GM23248 (cell line): ENCODE measurements at regions of chr18 and their contacts with region 1.

Region 1: DNA sequence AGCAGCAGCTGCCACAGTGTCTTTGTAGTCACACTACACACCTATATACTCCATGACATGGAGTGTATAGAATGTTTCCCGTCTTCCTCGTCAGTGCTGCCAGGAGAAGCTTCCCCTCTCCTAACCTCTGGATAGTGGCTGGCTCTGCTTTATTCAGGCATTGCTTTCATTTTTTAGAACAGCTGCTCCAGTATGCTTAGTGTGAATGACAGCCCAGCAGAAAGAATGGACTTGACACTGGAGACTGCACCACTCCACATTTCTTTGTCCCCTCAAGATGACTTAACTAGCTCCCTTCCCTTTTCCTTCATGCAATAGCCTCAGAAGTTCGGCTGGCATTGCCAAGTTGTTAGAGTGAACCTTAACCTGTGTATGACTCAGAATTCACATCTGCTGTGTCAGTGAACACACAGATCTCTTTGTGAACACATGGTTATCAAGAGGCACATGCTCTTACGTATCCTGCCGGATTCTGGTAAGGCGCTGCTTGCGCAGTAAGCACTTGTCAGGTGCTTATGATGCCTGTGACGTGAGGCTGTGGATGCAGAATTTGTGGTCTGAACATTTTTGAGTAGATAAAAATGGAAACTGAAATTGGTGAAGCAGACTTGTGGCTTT is 73.9 kb downstream of the NEDD4L start:
- DNase-seq: peak; percentile 76
- H3K4me3 ChIP-seq: no peak overlapping the region
- H3K27ac ChIP-seq: no peak overlapping the region
- H3K4me1 ChIP-seq: no peaks in the 10 kb centered on the region
- H3K27me3 ChIP-seq: no peaks in the 10 kb centered on the region

Region 2: GRCh38 chr18:57898506-57899124 is 219.3 kb before region 1 on chr18:
- in situ Hi-C with region 1: loop called (anchors 10 kb)
- DNase-seq: peak; percentile 87
- H3K4me3 ChIP-seq: no peak overlapping the region
- H3K27ac ChIP-seq: peak overlapping the region; percentile 39
- H3K4me1 ChIP-seq: peaks cover 15% of the 10 kb centered on the region
- H3K27me3 ChIP-seq: no peaks in the 10 kb centered on the region

Region 3: GRCh38 chr18:58310517-58310916 is 192.6 kb after region 1 on chr18:
- in situ Hi-C with region 1: no loop called
- DNase-seq: no peak
- H3K4me3 ChIP-seq: no peak overlapping the region
- H3K27ac ChIP-seq: no peak overlapping the region
- H3K4me1 ChIP-seq: peaks cover 14% of the 10 kb centered on the region
- H3K27me3 ChIP-seq: peaks cover 10% of the 10 kb centered on the region; the same call in 1 of the 2 replicates

Region 4: DNA sequence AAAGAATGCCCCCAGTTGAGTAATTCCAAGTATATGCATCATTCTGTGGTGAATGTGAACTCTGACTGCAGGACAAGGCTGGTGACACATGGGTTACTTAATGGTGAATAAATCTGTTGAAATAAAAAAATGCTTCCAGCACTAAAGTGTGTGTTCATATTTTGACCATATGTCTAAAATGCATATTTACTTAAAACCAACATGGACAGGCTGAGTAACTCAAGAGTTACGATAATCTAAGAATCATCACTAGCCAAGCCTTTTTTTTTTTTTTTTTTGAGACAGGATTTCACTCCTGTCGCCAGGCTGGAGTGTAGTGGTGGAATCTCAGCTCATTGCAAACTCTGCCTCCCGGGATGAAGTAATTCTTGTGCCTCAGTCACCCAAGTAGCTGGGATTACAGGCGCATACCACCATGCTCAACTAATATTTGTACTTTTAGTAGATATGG is 1626.4 kb after region 1 on chr18:
- in situ Hi-C with region 1: no loop called
- DNase-seq: peak; percentile 95
- H3K4me3 ChIP-seq: no peak overlapping the region
- H3K27ac ChIP-seq: peak overlapping the region; percentile 87
- H3K4me1 ChIP-seq: peaks cover 45% of the 10 kb centered on the region
- H3K27me3 ChIP-seq: no peaks in the 10 kb centered on the region